Panc1 (cell line): ENCODE measurements at regions of chr14 and their contacts with region 1.

Region 1: DNA sequence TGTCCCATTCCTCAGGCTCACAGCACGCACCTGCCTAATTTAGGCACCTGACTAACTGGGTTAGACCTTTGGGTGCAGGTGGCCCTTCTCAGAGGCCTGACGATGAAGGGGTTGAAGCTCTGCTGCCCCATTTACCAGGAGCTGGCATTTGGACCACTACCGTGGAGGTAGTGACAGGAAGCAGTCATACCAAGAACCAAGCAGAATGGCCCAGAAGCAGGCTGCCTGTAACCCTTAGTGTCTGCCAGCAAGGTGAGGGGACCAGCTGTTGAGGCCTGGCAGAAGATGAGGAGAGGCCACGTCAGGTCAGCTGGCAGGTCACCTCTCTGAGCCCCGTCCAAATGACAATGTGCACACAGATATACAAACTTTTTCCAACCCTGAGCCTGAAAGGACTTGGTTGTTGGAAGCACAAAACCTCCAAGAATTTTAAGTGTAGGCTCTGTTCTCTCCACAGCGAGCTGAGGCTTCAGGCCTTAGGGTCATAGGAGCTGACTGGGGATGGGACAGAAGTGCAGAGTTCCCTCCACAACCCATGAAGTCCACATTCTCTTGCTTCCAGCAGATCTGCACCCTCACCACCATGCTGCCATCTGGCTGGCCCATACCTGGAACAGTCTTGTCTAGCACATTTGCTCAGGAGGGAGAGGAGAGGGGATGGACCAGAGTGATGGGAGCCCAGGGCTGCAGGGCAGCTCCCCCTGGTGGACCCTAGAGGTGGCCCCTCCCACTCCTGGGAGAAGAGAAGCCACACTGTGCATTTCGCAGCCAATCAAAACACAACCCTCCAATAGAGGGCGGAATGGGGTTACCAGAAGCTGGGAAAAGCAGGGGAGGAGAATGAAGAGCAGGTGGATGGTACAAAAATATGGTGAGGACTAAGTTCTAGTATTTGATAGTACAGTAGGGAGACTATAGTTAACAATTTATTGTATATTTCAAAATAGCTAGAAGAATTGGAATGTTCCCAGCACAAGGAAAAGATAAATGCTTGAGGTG is 23.3 kb downstream of the VASH1 start:
- DNase-seq: no peak
- ATAC-seq: peak; percentile 90
- H3K4me3 ChIP-seq: no peak overlapping the region
- H3K27ac ChIP-seq: no peak overlapping the region
- H3K4me1 ChIP-seq: no peaks in the 10 kb centered on the region
- H3K27me3 ChIP-seq: no peaks in the 10 kb centered on the region
- CTCF ChIP-seq: peak; percentile 79

Region 2: DNA sequence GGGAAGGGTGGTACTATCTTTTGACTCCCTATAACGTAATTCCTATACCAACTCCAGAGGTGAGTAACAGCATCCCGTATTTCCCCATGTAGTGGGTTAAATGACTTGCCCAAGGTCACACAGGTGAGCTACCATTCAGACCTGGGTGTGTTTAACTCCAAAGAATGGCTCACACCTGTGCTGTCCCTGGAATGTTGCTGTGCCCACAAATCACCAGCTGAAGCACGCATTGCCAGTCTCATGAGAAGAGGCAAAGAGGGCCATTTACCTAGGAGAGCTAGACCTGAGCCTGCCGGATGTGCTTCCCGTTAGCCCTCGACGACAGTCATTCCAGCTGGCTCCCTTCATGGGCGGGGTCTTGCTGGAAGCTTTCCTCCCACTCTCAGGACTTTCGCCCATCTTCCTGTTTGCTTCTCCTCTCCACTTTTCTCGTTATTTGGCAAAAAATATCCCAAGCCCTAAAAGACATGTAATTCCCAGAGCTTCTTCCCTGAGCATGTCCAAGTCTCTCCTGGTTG is 129.9 kb before region 1 on chr14:
- CTCF ChIA-PET with region 1: no interaction called
- POLR2A ChIA-PET with region 1: no interaction called
- in situ Hi-C with region 1: no loop called
- intact Hi-C with region 1: no loop called
- DNase-seq: no peak
- ATAC-seq: no peak
- H3K4me3 ChIP-seq: no peak overlapping the region
- H3K27ac ChIP-seq: no peak overlapping the region
- H3K4me1 ChIP-seq: no peaks in the 10 kb centered on the region
- H3K27me3 ChIP-seq: peaks cover 2% of the 10 kb centered on the region
- CTCF ChIP-seq: no peak

Region 3: DNA sequence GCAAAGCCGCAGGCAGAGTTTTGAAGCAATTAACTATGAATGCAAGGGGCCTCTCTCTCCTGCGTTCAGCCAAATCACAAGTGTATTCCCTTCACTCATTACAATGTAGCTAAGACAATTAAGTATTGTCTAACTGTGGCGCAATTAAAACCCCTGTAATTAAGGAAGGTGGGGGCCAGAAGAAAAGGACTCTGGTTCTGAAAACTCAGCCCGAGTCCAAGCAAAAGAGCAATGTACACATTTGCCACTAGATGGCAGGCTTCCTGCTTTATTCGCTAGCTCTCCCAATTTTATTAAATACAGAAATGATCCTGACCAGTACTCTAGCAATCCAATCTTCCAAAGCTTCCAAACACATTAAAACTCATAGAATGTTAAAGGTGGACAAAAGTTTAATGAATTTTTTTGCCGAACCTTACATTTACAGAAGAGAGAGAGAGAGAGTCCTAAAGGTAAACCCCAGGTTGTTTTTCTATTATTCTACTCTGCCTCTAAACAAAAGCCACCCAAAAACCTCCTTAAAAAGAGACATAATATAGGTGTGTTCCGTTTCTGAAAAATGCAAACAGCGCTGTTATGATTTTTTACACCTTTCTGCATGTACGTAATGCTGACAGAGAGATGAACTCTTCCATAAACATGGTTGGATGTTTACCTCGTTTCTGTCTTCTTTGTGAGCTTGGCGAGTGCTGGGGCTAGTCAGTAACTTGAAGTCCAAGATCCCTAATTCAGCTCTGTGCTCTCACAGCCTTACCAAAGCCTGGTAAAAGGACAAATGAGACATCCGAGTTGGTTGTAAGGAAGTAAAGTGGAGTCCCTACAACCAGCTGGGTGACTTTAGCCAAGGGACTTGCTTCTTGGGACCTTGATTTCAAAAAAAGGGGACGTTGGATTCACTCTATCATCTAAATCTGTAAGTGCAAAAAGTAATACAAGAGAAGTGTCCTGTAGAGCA is 74.2 kb before region 1 on chr14:
- CTCF ChIA-PET with region 1: interaction called, 6 read pairs
- POLR2A ChIA-PET with region 1: no interaction called
- in situ Hi-C with region 1: no loop called
- intact Hi-C with region 1: loop called (anchors 2 kb)
- DNase-seq: no peak
- ATAC-seq: peak; percentile 78
- H3K4me3 ChIP-seq: no peak overlapping the region
- H3K27ac ChIP-seq: no peak overlapping the region
- H3K4me1 ChIP-seq: no peaks in the 10 kb centered on the region
- H3K27me3 ChIP-seq: no peaks in the 10 kb centered on the region
- CTCF ChIP-seq: peak; percentile 80

Region 4: GRCh38 chr14:76872796-76873432 is 88.3 kb after region 1 on chr14:
- CTCF ChIA-PET with region 1: no interaction called
- POLR2A ChIA-PET with region 1: no interaction called
- in situ Hi-C with region 1: no loop called
- intact Hi-C with region 1: no loop called
- DNase-seq: peak; percentile 27
- ATAC-seq: no peak; the same call in 1 of the 2 replicates
- H3K4me3 ChIP-seq: no peak overlapping the region
- H3K27ac ChIP-seq: no peak overlapping the region
- H3K4me1 ChIP-seq: no peaks in the 10 kb centered on the region
- H3K27me3 ChIP-seq: no peaks in the 10 kb centered on the region
- CTCF ChIP-seq: peak; percentile 85